Activated naive CD4-positive, alpha-beta T cell treated with anti-CD3 and anti-CD28 coated beads for 36 hours (primary cell): ENCODE measurements at regions of chr12 and their contacts with region 1.

Region 1: DNA sequence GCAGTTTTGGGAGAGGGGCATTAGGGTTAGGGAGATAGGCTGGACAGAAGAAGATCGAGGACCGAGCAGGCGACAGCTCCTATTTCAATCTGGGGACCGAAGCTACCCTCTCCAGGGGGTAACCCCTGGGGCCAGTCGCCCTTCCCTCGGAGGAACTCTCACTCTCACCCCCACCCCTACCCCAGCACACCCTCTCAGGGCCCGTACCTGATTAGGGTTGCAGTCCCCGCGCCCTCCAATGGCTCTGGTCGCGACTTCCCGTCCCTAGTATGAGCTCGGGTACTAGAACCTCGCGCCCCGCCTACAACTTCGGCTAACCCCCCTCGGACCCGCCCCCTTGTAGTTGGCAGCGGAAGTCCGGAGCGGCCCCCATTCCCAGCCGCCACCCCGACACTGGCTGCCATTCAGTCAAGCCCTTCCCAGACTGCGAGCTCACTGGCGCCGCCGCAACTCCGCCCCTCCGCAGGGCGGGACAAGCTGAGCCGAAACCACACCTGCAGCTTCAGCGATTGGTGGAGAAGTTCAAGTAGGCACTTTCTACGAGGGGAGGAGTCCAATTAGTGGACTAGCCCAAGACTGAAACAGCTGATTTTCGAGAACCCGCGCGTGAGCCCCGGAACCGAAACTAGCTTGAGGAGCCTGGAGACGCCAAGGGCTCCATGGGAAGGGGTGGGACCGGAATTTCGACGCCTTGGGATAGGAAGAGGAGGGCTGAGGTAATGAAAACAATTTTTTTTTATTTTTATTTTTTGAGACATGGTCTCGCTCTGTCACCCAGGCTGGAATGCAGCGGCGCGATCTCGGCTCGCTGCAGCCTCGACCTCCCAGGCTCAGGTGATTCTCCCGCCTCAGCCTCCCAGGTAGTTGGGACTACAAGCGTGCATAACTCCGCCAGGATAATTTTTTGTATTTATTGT is at the start of gene STAT2:
- DNase-seq: peak; percentile 99
- H3K4me3 Mint-ChIP-seq: peak within 1 kb of the TSS; percentile 93
- H3K27ac Mint-ChIP-seq: peak within 1 kb of the TSS; percentile 93
- H3K4me1 Mint-ChIP-seq: peaks cover 20% of the 10 kb centered on the region
- H3K27me3 Mint-ChIP-seq: no peaks in the 10 kb centered on the region
- total RNA-seq, gene STAT2: 109 to 119 TPM

Region 2: GRCh38 chr12:56315622-56316473 is 44.3 kb before region 1 on chr12 and contains the start of gene CNPY2:
- CTCF ChIA-PET with region 1: interaction called, 4 read pairs
- intact Hi-C with region 1: loop called (anchors 1 kb)
- DNase-seq: peak; percentile 92
- H3K4me3 Mint-ChIP-seq: peak within 1 kb of the TSS; percentile 97
- H3K27ac Mint-ChIP-seq: peak within 1 kb of the TSS; percentile 97
- H3K4me1 Mint-ChIP-seq: peaks cover 16% of the 10 kb centered on the region
- H3K27me3 Mint-ChIP-seq: no peaks in the 10 kb centered on the region
- total RNA-seq, gene CNPY2: 47.5 to 57.3 TPM

Region 3: GRCh38 chr12:56461235-56462159 is 101.4 kb after region 1 on chr12:
- CTCF ChIA-PET with region 1: interaction called, 20 read pairs
- intact Hi-C with region 1: loop called (anchors 1 kb)
- DNase-seq: no peak
- H3K4me3 Mint-ChIP-seq: no peak overlapping the region
- H3K27ac Mint-ChIP-seq: no peak overlapping the region
- H3K4me1 Mint-ChIP-seq: peaks cover 3% of the 10 kb centered on the region
- H3K27me3 Mint-ChIP-seq: no peaks in the 10 kb centered on the region

Region 4: DNA sequence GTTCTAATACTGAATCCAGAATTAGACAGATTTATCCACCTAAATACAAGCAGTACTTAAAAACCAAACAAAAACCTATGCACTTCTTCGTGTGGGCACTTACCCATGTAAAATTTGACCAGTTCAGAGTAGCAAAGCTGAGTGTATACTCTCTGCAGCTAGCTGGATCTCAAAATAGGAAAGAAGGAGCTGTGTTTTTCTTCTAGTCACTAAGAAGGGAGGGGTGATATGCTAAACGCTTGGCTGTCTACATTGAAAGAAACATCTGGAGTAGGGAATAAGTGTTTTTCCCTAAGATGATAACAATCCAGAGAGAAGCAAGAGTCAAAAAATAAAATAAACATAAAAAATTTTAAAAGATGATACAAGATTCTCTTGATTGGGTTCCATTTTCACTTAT is 181.5 kb after region 1 on chr12:
- CTCF ChIA-PET with region 1: no interaction called
- intact Hi-C with region 1: no loop called
- DNase-seq: no peak
- H3K4me3 Mint-ChIP-seq: no peak overlapping the region
- H3K27ac Mint-ChIP-seq: no peak overlapping the region
- H3K4me1 Mint-ChIP-seq: no peaks in the 10 kb centered on the region
- H3K27me3 Mint-ChIP-seq: no peaks in the 10 kb centered on the region